Mammary epithelial cell (primary cell): ENCODE measurements at regions of chr7 and their contacts with region 1.

Region 1: GRCh38 chr7:68213838-68214237 is 1217.2 kb downstream of the TYW1 start:
- DNase-seq: no peak
- H3K4me3 ChIP-seq: no peak overlapping the region
- H3K27ac ChIP-seq: no peak overlapping the region
- H3K4me1 ChIP-seq: no peaks in the 10 kb centered on the region
- H3K27me3 ChIP-seq: no peaks in the 10 kb centered on the region
- CTCF ChIP-seq: no peak

Region 2: DNA sequence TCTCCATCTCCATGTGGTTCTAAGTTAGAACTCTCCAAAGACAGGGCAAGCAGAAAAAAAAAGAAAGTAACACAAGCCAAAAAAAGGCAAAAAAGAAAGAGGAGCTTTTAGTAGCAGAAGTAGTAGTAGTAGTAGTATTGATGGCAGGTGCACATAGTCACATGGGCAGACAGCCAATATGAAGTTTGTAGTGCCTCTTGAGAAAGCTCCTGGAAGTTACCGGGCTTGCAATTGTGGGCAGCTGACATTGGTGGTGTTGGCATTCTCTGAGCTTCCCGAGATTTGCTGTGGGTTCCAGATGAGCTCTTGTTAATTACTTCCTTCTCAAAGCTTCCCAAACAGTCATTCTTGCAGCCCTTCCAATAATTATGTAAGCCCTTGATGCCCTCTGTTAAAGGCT is 88.7 kb before region 1 on chr7:
- CTCF ChIA-PET with region 1: no interaction called
- dilution Hi-C with region 1: no loop called
- in situ Hi-C with region 1: no loop called
- intact Hi-C with region 1: no loop called
- DNase-seq: no peak
- H3K4me3 ChIP-seq: no peak overlapping the region
- H3K27ac ChIP-seq: no peak overlapping the region
- H3K4me1 ChIP-seq: no peaks in the 10 kb centered on the region
- H3K27me3 ChIP-seq: no peaks in the 10 kb centered on the region
- CTCF ChIP-seq: no peak

Region 3: GRCh38 chr7:68250143-68250542 is 36.3 kb after region 1 on chr7:
- CTCF ChIA-PET with region 1: no interaction called
- dilution Hi-C with region 1: loop called (anchors 5 kb)
- in situ Hi-C with region 1: no loop called
- intact Hi-C with region 1: no loop called
- DNase-seq: no peak
- H3K4me3 ChIP-seq: no peak overlapping the region
- H3K27ac ChIP-seq: no peak overlapping the region
- H3K4me1 ChIP-seq: no peaks in the 10 kb centered on the region
- H3K27me3 ChIP-seq: no peaks in the 10 kb centered on the region
- CTCF ChIP-seq: no peak

Region 4: DNA sequence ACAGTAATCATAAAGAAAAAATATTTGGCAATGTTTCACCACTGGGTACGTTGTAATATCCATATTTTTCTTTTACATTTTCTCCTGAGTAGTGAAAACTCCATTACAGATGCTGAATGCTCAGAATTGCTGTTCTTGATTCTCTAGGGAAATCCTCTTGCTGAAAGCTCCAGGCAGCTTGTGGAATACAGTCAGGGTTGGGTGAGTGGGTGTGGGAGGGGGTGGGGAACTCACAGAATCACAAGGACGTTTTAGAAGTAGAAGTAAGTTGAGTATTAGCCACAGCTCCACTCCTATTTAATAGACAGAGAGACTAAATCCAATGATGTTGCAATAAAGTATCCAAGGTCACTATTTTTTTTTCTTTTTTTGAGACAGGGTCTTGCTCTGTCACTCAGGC is 53.6 kb after region 1 on chr7:
- CTCF ChIA-PET with region 1: no interaction called
- dilution Hi-C with region 1: no loop called
- in situ Hi-C with region 1: no loop called
- intact Hi-C with region 1: no loop called
- DNase-seq: no peak
- H3K4me3 ChIP-seq: no peak overlapping the region
- H3K27ac ChIP-seq: no peak overlapping the region
- H3K4me1 ChIP-seq: no peaks in the 10 kb centered on the region
- H3K27me3 ChIP-seq: no peaks in the 10 kb centered on the region
- CTCF ChIP-seq: no peak

Region 5: DNA sequence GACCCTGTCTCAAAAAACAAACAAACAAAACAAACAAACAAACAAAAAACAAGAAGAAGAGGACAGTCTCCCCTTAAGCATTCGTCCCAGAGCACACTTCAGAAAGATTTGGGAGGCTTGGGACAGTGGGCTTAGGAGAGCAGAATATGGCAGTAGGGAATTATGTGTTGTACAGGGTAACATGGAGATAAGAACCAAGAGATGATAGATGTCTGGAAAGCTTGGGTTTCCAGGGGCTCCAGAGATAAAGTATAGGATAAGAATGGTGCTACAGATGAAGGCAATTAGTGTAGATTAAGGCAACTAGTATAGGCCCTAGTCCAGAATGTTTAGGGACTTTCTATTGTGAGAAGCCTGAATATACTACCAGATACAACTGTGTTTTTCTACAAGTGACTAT is 449.6 kb after region 1 on chr7:
- CTCF ChIA-PET with region 1: no interaction called
- dilution Hi-C with region 1: no loop called
- in situ Hi-C with region 1: no loop called
- intact Hi-C with region 1: no loop called
- DNase-seq: no peak
- H3K4me3 ChIP-seq: no peak overlapping the region
- H3K27ac ChIP-seq: no peak overlapping the region
- H3K4me1 ChIP-seq: no peaks in the 10 kb centered on the region
- H3K27me3 ChIP-seq: no peaks in the 10 kb centered on the region
- CTCF ChIP-seq: no peak